GM12878 (cell line): ENCODE measurements at regions of chr6 and their contacts with region 1.

Region 1: DNA sequence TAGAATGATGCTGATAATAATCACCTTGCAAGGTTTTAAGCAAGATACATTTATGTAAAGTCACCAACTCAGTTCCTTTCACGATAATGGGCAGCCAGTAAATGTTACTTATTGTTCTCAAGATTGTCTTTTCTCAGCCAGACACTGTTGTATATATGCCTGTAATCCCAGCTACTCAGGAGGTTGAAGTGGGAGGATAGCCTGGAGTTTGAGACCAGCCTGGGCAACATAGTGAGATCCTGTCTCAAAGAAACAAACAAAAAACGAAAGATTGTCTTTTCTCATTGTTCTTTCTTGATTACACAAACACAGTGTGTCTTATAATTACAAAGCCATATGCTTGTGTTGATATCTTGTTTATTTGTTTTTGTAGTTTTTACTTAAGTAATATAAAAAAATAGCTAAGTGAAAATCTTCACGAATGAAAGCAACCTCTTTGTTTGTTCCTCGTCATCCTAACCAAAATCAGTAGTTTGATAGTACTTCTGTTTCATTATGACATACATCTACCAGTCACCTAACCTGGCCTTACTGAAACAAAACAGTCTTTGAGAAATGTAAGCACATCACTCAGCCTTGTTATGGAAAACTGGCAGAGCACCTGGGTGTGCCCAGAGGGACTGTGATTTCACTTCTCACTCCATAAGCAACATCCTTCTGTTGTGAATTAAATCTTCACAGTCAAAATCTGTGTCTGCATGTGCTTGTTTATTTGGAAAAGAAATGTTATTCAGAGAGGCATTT is 436.2 kb upstream of the SOX4 start:
- DNase-seq: peak; percentile 53
- ATAC-seq: peak; percentile 86
- H3K4me3 ChIP-seq: no peak overlapping the region
- H3K27ac ChIP-seq: peak overlapping the region; percentile 54; the same call in 1 of the 2 replicates
- H3K4me1 ChIP-seq: peaks cover 13% of the 10 kb centered on the region; the same call in 1 of the 2 replicates
- H3K27me3 ChIP-seq: no peaks in the 10 kb centered on the region
- CTCF ChIP-seq: no peak
- EP300 ChIP-seq: peak; percentile 72 to 84; a peak in 3 of 4 replicates
- POLR2A ChIP-seq: no peak
- RAD21 ChIP-seq: no peak

Region 2: DNA sequence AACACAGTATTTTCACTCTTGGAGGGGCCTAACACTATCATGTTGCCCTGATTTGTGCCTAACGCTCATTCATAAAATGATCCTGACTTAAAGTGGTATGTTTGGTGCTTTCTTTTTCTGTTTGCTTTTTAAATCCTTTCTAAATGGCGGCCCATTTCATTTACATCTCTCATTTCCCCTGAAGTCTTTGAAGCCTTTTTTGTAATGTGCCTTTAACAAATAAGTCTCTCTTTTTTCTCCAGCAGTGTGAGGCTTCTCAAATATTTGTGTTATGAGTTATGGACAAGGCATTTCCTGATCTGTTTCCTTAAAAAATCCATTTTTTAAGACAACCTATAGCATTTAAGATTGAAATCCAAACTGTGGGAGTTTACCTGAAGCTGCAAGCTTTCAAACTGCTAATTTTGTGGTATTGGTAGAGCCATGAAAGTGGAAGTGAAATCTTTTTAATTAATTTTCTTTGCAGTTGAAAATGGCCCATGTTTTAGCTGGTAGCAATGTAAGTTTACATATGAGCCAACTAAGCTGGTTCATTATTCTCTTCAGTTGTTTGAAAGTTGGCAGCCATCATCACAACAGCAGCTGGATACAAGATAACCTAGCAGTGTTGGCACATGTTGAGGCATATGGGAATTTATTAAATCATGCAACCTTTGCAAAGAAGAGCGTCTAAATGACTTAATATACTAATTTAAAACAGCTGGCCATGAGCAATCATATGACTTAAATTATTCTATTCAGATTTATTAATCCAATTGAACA is 153.4 kb before region 1 on chr6:
- CTCF ChIA-PET with region 1: no interaction called
- POLR2A ChIA-PET with region 1: no interaction called
- RAD21 ChIA-PET with region 1: interaction called, 6 read pairs
- SMC1A ChIA-PET with region 1: interaction called, 8 read pairs
- in situ Hi-C with region 1: no loop called
- intact Hi-C with region 1: loop called (anchors 1 kb)
- DNase-seq: peak; percentile 72
- ATAC-seq: peak; percentile 89
- H3K4me3 ChIP-seq: peak overlapping the region; percentile 32; the same call in 1 of the 2 replicates
- H3K27ac ChIP-seq: peak overlapping the region; percentile 83
- H3K4me1 ChIP-seq: peaks cover 20% of the 10 kb centered on the region
- H3K27me3 ChIP-seq: no peaks in the 10 kb centered on the region
- CTCF ChIP-seq: no peak
- EP300 ChIP-seq: peak in 1 of 2 experiments; percentile 72; a peak in 3 of 4 replicates
- POLR2A ChIP-seq: no peak
- RAD21 ChIP-seq: no peak

Region 3: GRCh38 chr6:21188505-21189223 is 31.3 kb after region 1 on chr6:
- CTCF ChIA-PET with region 1: interaction called, 3 read pairs
- POLR2A ChIA-PET with region 1: interaction called, 4 read pairs
- RAD21 ChIA-PET with region 1: interaction called, 6 read pairs
- SMC1A ChIA-PET with region 1: interaction called, 17 read pairs
- in situ Hi-C with region 1: no loop called
- intact Hi-C with region 1: loop called (anchors 2 kb)
- DNase-seq: peak; percentile 82
- ATAC-seq: peak; percentile 77
- H3K4me3 ChIP-seq: no peak overlapping the region
- H3K27ac ChIP-seq: peak overlapping the region; percentile 77
- H3K4me1 ChIP-seq: peaks cover 19% of the 10 kb centered on the region
- H3K27me3 ChIP-seq: no peaks in the 10 kb centered on the region
- CTCF ChIP-seq: no peak
- EP300 ChIP-seq: no peak
- POLR2A ChIP-seq: no peak
- RAD21 ChIP-seq: no peak

Region 4: GRCh38 chr6:21208081-21208795 is 50.9 kb after region 1 on chr6:
- CTCF ChIA-PET with region 1: no interaction called
- POLR2A ChIA-PET with region 1: no interaction called
- RAD21 ChIA-PET with region 1: interaction called, 3 read pairs
- SMC1A ChIA-PET with region 1: interaction called, 6 read pairs
- in situ Hi-C with region 1: no loop called
- intact Hi-C with region 1: loop called (anchors 1 kb)
- DNase-seq: no peak
- ATAC-seq: peak; percentile 54
- H3K4me3 ChIP-seq: no peak overlapping the region
- H3K27ac ChIP-seq: peak overlapping the region; percentile 50
- H3K4me1 ChIP-seq: peaks cover 39% of the 10 kb centered on the region
- H3K27me3 ChIP-seq: no peaks in the 10 kb centered on the region
- CTCF ChIP-seq: no peak
- EP300 ChIP-seq: no peak; a peak in 1 of 4 replicates
- POLR2A ChIP-seq: no peak
- RAD21 ChIP-seq: no peak

Region 5: GRCh38 chr6:21213492-21213891 is 56.1 kb after region 1 on chr6:
- CTCF ChIA-PET with region 1: no interaction called
- POLR2A ChIA-PET with region 1: no interaction called
- RAD21 ChIA-PET with region 1: interaction called, 3 read pairs
- SMC1A ChIA-PET with region 1: interaction called, 6 read pairs
- in situ Hi-C with region 1: no loop called
- intact Hi-C with region 1: loop called (anchors 1 kb)
- DNase-seq: peak; percentile 84
- ATAC-seq: peak; percentile 77
- H3K4me3 ChIP-seq: 0 out of 2 replicates have a peak overlapping the region, but pooled peaks have one; percentile 47
- H3K27ac ChIP-seq: peak overlapping the region; percentile 74
- H3K4me1 ChIP-seq: peaks cover 42% of the 10 kb centered on the region
- H3K27me3 ChIP-seq: no peaks in the 10 kb centered on the region
- CTCF ChIP-seq: no peak
- EP300 ChIP-seq: peak; percentile 67 to 69; a peak in 2 of 4 replicates
- POLR2A ChIP-seq: no peak
- RAD21 ChIP-seq: no peak